HCT116 (cell line): ENCODE measurements at regions of chr2 and their contacts with region 1.

Region 1: DNA sequence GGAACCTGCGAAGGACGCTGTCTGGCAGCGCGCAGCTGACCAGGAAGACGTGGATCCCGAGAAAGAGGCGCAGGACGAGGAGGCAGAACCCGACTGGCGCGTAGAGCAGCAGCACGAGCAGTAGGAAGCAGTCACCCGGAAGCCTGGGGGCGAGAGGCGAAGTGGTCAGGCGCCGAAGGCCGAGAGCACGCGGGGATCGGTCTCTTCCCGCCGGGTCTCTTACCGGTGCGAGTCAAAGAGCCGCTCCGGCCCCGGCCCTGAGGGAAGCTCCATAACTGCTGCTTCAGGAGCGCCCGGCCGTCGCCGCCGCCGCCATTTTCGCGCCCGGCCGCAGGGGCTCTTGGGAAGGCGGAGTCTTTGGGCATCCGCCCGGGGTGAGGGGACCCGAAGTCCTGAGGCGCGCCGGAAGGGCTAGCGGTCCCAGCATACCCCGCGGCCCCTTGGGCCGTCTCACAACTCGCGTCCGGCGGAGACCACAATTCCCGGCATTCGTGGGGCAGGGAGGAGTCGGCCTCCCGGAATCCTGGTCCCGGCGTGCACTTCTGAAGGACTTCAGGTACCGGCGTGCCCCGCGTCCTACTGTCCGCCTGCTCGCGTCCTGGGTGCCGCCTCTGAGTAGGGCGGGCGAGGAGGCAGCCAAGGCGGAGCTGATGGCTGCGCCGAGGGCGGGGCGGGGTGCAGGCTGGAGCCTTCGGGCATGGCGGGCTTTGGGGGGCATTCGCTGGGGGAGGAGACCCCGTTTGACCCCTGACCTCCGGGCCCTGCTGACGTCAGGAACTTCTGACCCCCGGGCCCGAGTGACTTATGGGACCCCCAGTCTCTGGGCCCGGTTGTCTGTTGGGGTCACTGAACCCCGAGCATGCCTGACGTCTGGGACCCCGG is at the starts of genes AUP1 and HTRA2:
- DNase-seq: peak; percentile 98
- ATAC-seq: peak; percentile 92
- H3K4me3 ChIP-seq: peak within 1 kb of the TSS; percentile 98 to 100
- H3K27ac ChIP-seq: peak within 1 kb of the TSS; percentile 94
- H3K4me1 ChIP-seq: peaks cover 14 to 30% of the 10 kb centered on the region in 2 experiments
- H3K27me3 ChIP-seq: no peaks in the 10 kb centered on the region
- CTCF ChIP-seq: no peak
- POLR2A ChIP-seq: peak; percentile 66
- RAD21 ChIP-seq: no peak
- total RNA-seq, gene AUP1: 116 TPM
- total RNA-seq, gene HTRA2: 36.2 TPM

Region 2: GRCh38 chr2:74250189-74250631 is 279.4 kb before region 1 on chr2:
- CTCF ChIA-PET with region 1: interaction called, 6 read pairs
- POLR2A ChIA-PET with region 1: no interaction called
- RAD21 ChIA-PET with region 1: no interaction called
- intact Hi-C with region 1: loop called (anchors 5 kb)
- DNase-seq: peak; percentile 36
- ATAC-seq: peak; percentile 92
- H3K4me3 ChIP-seq: no peak overlapping the region
- H3K27ac ChIP-seq: no peak overlapping the region
- H3K4me1 ChIP-seq: no peaks in the 10 kb centered on the region
- H3K27me3 ChIP-seq: no peaks in the 10 kb centered on the region
- CTCF ChIP-seq: peak; percentile 67 to 83 (median 81); a peak in 5 of 6 replicates
- POLR2A ChIP-seq: no peak
- RAD21 ChIP-seq: peak; percentile 69

Region 3: DNA sequence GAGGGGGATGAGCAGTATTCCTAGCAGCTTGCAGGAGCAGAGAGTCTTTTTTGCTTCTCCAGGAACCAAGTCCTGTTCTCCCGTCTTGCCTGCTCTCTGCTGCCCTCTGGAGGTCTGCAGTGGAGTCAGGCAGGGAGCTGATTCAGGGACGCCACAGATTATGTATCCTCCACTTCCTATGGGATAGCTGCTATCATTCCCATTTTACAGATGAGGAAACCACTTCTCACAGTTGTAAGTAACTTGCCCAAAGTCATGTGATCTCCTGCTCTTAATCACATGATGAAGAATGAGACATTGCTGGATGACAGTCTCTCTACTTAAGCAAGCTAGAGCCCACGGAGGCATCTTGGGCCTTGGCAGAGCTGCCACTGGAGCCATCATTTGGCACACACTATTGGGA is 194.7 kb before region 1 on chr2:
- CTCF ChIA-PET with region 1: interaction called, 7 read pairs
- POLR2A ChIA-PET with region 1: no interaction called
- RAD21 ChIA-PET with region 1: no interaction called
- intact Hi-C with region 1: loop called (anchors 1 kb)
- DNase-seq: peak; percentile 57
- ATAC-seq: peak; percentile 96
- H3K4me3 ChIP-seq: no peak overlapping the region
- H3K27ac ChIP-seq: no peak overlapping the region
- H3K4me1 ChIP-seq: no peaks in the 10 kb centered on the region
- H3K27me3 ChIP-seq: no peaks in the 10 kb centered on the region
- CTCF ChIP-seq: peak; percentile 74 to 98 (median 82)
- POLR2A ChIP-seq: no peak
- RAD21 ChIP-seq: peak; percentile 72

Region 4: DNA sequence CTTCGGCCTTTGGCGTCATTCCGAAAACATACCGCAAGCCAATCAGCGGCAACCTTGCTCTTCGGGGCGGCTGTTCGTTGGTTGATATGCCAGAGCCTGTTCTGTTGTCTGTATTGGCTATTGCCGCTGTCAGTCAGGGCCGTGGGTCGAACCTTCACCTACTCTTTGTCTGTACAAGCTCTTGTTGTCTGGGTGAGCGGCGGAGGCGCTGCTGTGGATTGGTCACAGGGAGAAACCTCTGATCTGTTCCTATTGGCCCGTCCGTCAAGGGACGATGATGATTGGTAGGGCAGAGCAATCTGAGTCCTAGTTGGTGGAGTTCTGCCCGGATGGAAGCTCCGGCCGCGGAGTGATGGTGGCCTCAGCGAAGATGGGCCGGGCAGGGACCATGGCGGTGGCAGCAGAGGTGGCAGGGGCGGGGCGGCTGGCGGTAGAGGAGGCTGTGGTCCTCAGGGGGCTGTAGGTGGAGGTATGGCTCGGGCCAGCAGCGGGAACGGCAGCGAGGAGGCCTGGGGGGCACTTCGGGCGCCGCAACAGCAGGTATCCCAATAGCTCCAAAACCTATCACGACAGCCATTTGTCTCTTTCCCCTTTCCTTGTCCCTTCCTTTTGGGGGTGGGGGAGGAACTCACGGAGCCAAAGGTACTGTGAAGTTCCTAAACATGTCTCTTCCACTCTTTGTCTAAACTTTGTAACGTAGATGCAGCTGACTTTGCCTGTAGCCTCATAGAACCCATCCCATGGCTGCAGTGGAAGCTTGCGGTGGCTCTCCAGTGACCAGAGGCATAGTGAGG is 71.3 kb before region 1 on chr2 and contains the start of gene WBP1:
- CTCF ChIA-PET with region 1: interaction called, 5 read pairs
- POLR2A ChIA-PET with region 1: no interaction called
- RAD21 ChIA-PET with region 1: no interaction called
- intact Hi-C with region 1: loop called (anchors 1 kb)
- DNase-seq: peak; percentile 100
- ATAC-seq: peak; percentile 87
- H3K4me3 ChIP-seq: peak within 1 kb of the TSS; percentile 70 to 98
- H3K27ac ChIP-seq: peak within 1 kb of the TSS; percentile 89
- H3K4me1 ChIP-seq: peaks cover 12 to 42% of the 10 kb centered on the region in 2 experiments
- H3K27me3 ChIP-seq: no peaks in the 10 kb centered on the region
- CTCF ChIP-seq: no peak
- POLR2A ChIP-seq: peak; percentile 6
- RAD21 ChIP-seq: no peak
- total RNA-seq, gene WBP1: 64.7 TPM

Region 5: DNA sequence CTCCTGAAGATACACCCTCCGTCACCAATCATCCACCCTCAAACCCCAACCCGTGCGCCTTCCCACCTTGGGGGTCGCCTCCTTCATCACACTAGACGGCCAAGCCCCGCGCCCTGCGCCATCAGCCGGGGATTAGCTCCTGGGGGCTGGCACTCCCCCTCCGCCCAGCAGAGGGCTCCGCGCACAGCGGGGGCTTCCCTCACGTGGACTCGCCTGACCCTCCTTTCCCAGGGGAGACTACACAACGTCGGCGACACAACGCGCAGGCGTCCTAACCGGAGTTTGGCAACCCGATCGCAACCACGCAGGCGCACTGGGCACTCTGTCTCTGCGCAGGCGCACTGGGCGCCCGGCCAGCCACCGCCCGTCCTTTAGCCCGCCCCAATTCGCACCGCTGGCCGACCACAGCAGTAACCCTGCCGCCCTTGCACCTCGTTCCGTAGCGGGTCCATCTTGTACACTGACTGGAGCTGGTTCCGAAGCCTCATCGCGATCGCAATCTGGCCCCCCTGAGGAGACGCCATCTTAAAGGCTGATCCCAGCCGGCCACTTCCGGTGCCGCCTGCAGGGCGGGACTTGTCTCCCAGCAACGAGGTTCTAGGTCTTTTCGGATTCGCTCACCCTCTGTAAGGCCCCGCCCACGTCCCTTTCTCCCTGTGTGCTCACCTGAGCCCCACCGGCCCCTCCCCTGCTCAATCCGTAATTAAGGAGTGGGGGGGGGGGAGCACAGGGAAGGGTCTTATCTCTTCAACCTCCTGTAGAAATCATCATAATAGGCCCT is 22.3 kb before region 1 on chr2 and contains the start of gene PCGF1:
- CTCF ChIA-PET with region 1: interaction called, 4 read pairs
- POLR2A ChIA-PET with region 1: interaction called, 7 read pairs
- RAD21 ChIA-PET with region 1: no interaction called
- intact Hi-C with region 1: loop called (anchors 1 kb)
- DNase-seq: peak; percentile 96
- ATAC-seq: peak; percentile 83
- H3K4me3 ChIP-seq: peak within 1 kb of the TSS; percentile 85 to 93
- H3K27ac ChIP-seq: peak within 1 kb of the TSS; percentile 91
- H3K4me1 ChIP-seq: peaks cover 22 to 46% of the 10 kb centered on the region in 2 experiments
- H3K27me3 ChIP-seq: no peaks in the 10 kb centered on the region
- CTCF ChIP-seq: peak in 2 of 3 experiments; percentile 25 to 32; a peak in 1 of 6 replicates
- POLR2A ChIP-seq: peak; percentile 46
- RAD21 ChIP-seq: no peak
- total RNA-seq, gene PCGF1: 39.9 TPM

Region 6: GRCh38 chr2:75303236-75303635 is 773.6 kb after region 1 on chr2:
- CTCF ChIA-PET with region 1: no interaction called
- POLR2A ChIA-PET with region 1: no interaction called
- RAD21 ChIA-PET with region 1: no interaction called
- intact Hi-C with region 1: no loop called
- DNase-seq: no peak
- ATAC-seq: no peak
- H3K4me3 ChIP-seq: no peak overlapping the region
- H3K27ac ChIP-seq: no peak overlapping the region
- H3K4me1 ChIP-seq: no peaks in the 10 kb centered on the region
- H3K27me3 ChIP-seq: 0 out of 2 replicates have a peak, but pooled peaks cover 5% of the 10 kb centered on the region
- CTCF ChIP-seq: no peak
- POLR2A ChIP-seq: no peak
- RAD21 ChIP-seq: no peak